ENCODE measurements at regions of chr6 and their contacts with region 1.

Region 1: DNA sequence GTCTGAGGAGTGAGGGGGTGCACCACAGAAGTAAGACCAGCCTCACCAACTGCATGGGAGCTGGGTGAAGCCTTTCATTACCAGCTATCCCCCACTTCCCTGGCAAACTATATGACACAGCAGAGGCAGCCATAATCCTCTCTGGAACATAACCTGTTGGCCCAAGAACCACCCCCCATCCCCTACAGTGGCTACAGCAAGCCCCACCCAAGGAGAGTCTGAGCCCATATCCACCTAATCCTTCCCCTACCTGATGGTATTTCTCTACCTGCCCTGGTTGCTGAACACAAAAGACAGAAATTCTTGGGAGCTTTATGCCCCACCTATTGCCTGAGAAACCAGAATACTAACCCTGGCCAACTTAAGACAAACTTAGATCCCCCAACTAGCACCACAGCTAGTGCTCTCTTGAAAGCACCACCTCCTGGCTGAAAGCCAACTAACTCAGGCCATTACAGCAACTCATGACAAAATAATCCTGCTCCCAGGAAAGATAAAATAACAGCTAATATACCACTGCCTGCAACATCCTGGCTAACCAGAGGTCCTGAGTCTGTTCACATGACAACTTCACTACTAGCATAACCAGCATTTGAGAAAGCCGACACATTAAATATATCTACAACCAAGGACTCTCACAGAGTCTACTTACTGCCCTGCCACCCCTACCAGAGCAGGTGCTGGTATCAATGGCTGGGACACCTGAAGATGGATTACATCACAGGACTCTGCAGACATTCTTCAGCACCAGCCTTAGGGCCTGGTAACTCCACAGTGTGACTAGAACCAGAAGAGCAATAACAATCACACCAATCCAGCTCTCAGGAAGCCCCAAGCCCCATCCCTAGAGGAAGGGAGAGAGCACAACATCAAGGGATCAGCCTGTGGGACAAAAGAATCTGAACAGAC is 11.1 kb downstream of the RNGTT start:
- DNase-seq: no peak
- H3K4me3 ChIP-seq: no peak overlapping the region
- H3K27ac ChIP-seq: no peak overlapping the region
- H3K4me1 ChIP-seq: no peaks in the 10 kb centered on the region
- H3K27me3 ChIP-seq: no peaks in the 10 kb centered on the region
- CTCF ChIP-seq: no peak

Region 2: GRCh38 chr6:87139236-87139635 is 1813.1 kb before region 1 on chr6:
- CTCF ChIA-PET with region 1: no interaction called
- POLR2A ChIA-PET with region 1: interaction called, 11 read pairs
- intact Hi-C with region 1: no loop called
- DNase-seq: peak in 1 of 2 experiments; percentile 23
- H3K4me3 ChIP-seq: no peak overlapping the region
- H3K27ac ChIP-seq: no peak overlapping the region
- H3K4me1 ChIP-seq: no peaks in the 10 kb centered on the region
- H3K27me3 ChIP-seq: no peaks in the 10 kb centered on the region
- CTCF ChIP-seq: peak; percentile 78

Region 3: GRCh38 chr6:88919032-88919431 is 33.3 kb before region 1 on chr6:
- CTCF ChIA-PET with region 1: interaction called, 17 read pairs
- POLR2A ChIA-PET with region 1: no interaction called
- intact Hi-C with region 1: no loop called
- DNase-seq: no peak
- H3K4me3 ChIP-seq: no peak overlapping the region
- H3K27ac ChIP-seq: no peak overlapping the region
- H3K4me1 ChIP-seq: no peaks in the 10 kb centered on the region
- H3K27me3 ChIP-seq: no peaks in the 10 kb centered on the region
- CTCF ChIP-seq: no peak; the same call in 1 of the 2 replicates

Region 4: DNA sequence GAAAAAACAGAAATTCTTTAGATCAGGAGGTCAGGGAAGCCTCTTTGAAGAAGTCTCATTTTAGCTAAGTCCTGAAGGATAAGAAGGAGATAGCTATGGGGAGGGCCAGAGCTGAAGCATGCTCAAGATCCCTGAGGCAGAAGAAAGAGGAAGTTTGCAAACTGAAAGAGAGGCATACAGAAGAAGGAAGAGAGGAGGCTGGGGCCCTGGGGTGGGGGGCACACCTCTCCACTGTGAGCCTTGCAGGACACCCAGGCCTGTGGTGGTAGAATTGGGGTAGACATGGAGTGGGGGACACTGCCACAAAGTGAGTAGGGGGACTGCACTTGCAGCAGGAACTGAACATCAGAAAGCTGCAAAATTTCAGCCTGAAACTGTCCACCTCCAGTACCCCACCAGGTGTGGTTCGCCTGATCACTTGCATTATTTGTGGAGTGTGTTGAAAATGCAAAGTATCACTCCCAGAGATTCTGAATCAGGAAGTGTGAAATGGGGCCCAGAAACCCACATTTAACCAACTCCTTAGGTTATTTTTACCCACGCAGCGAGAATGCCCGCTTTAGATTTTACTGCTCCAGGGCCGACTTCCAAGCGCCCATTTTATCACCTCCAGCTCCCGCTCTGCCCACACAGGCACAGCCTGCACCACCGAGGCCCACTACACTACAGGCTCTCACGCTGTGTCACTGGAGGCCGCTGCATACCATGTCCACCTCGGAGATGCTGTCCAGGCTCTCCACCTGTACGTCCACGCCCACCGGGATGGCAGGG is 318.8 kb after region 1 on chr6:
- CTCF ChIA-PET with region 1: no interaction called
- POLR2A ChIA-PET with region 1: no interaction called
- intact Hi-C with region 1: no loop called
- DNase-seq: no peak
- H3K4me3 ChIP-seq: no peak overlapping the region
- H3K27ac ChIP-seq: no peak overlapping the region
- H3K4me1 ChIP-seq: no peaks in the 10 kb centered on the region
- H3K27me3 ChIP-seq: no peaks in the 10 kb centered on the region
- CTCF ChIP-seq: no peak

Measured in PC-9 (cell line).